ENCODE measurements at regions of chr1 and their contacts with region 1.

Region 1: DNA sequence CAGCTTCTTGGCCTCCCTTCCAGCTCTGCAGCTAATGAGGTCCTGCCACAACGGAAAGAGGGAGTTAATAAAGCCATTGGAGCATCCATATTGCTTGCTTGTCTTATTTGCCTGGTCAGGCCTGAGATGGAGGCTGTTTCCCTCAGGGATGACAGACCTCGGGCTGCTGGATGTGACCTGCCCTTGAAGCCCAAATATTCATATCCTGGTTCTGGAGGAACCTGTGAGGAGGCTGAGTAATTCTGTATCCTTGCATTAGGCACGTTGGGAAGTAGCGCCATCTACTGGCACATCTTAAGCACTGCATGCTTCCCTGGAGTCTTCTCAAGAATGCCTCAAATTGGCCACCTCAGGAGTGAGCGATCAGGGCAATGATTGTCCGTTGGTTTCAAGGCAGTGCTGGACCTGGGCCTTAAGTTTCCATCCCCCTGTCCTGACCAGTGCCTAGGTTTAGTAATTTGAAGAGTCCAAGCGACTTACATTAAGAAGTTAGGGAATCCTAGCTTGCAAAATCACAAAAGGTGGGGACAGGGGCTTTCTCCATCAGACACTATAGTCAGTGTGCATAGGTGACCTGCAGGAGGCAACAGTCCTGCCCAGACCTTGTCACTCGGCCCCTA is 13.8 kb upstream of the NASP start:
- DNase-seq: peak; percentile 32 to 86 (median 60)
- ATAC-seq: peak; percentile 87 to 91 (median 90)
- H3K4me3 ChIP-seq: no peak overlapping the region
- H3K4me3 Mint-ChIP-seq: no peak overlapping the region
- H3K27ac ChIP-seq: no peak overlapping the region
- H3K27ac Mint-ChIP-seq: no peak overlapping the region
- H3K4me1 ChIP-seq: no peaks in the 10 kb centered on the region
- H3K4me1 Mint-ChIP-seq: no peaks in the 10 kb centered on the region
- H3K27me3 ChIP-seq: no peaks in the 10 kb centered on the region
- H3K27me3 Mint-ChIP-seq: no peaks in the 10 kb centered on the region

Region 2: GRCh38 chr1:45512641-45513054 is 57.4 kb before region 1 on chr1:
- CTCF ChIA-PET with region 1: interaction called, 14 to 25 read pairs
- POLR2A ChIA-PET with region 1: interaction called in 1 of 2 experiments, 16 read pairs
- DNase-seq: peak in 31 of 35 experiments; percentile 9 to 78 (median 37)
- ATAC-seq: peak; percentile 53 to 74 (median 70)
- H3K4me3 ChIP-seq: no peak overlapping the region
- H3K4me3 Mint-ChIP-seq: no peak overlapping the region
- H3K27ac ChIP-seq: no peak overlapping the region
- H3K27ac Mint-ChIP-seq: peak overlapping the region in 1 of 2 donors; percentile 66
- H3K4me1 ChIP-seq: peaks cover 0 to 5% of the 10 kb centered on the region in 2 experiments
- H3K4me1 Mint-ChIP-seq: peaks cover 1 to 9% (median 8%) of the 10 kb centered on the region in 3 donors
- H3K27me3 ChIP-seq: no peaks in the 10 kb centered on the region
- H3K27me3 Mint-ChIP-seq: no peaks in the 10 kb centered on the region

Region 3: DNA sequence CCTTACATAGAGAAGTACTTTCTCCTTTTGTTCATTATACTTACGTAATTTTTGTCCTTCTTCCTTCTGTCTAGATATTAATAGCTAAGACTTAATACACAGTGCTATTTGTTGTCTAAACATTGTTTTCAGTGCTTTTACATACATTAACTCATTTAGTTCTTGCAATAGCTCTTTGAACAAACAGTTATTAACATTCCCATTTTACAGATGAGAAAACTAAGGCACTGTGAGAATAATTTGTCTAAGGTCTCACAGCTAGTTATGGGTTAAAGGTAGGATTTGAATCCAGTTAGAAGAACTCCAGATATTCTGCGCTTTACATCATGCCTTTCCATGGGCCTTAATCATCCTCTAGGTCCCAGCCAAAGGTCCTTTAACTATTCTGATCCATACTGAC is 34.2 kb after region 1 on chr1:
- CTCF ChIA-PET with region 1: no interaction called
- POLR2A ChIA-PET with region 1: interaction called in 1 of 2 experiments, 12 read pairs
- DNase-seq: no peak
- ATAC-seq: no peak
- H3K4me3 ChIP-seq: no peak overlapping the region
- H3K4me3 Mint-ChIP-seq: no peak overlapping the region
- H3K27ac ChIP-seq: no peak overlapping the region
- H3K27ac Mint-ChIP-seq: no peak overlapping the region
- H3K4me1 ChIP-seq: peaks cover 0 to under 1% of the 10 kb centered on the region in 2 experiments
- H3K4me1 Mint-ChIP-seq: peaks cover 49 to 60% (median 55%) of the 10 kb centered on the region in 3 donors
- H3K27me3 ChIP-seq: no peaks in the 10 kb centered on the region
- H3K27me3 Mint-ChIP-seq: no peaks in the 10 kb centered on the region